Lower leg skin (tissue), 4 donors: ENCODE measurements at regions of chr1 and their contacts with region 1.

Region 1: DNA sequence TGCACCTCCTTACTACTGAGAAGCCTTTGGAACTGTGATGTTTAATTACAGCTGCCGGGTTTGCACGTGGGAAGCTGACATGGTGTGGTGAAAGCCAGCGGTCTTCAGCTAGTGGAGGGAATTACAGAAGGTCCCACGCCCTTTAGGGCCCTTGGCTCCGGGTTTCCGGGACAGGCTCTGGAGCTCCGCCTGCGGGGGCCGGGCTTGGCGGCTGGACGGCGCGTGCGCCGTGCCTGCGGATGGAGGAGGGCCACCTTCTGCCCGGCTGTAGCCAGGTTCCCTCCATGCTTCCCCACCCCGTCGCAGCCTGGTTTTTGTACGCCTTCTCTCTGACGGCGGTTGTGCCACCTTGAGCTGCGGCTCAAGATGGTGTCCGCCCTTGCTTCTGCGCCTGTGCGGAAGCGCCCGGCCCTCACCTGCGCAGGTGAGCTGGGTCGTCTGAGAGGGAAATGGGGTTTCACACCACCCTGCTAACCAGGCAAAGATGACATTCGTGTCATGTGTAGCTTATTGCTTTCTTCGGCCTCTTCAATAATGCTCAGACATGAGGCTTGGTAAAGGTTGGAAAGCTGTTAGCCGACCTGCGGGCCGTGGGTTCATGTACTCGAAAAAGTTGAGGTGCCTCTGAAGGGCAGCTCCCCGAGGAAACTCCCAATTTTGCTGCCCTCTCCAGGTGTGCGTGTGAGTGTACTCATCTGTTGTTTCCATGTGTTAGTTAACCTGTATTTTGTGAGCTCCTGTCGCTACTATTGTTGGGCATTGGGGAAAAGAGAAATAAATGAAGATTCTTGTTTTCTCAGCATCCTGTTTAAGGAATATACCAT is 36.6 kb upstream of the OPRD1 start:
- DNase-seq: peak; percentile 72 to 95
- H3K4me3 ChIP-seq: peak overlapping the region; percentile 34
- CTCF ChIP-seq: no peak
- POLR2A ChIP-seq: no peak

Region 2: DNA sequence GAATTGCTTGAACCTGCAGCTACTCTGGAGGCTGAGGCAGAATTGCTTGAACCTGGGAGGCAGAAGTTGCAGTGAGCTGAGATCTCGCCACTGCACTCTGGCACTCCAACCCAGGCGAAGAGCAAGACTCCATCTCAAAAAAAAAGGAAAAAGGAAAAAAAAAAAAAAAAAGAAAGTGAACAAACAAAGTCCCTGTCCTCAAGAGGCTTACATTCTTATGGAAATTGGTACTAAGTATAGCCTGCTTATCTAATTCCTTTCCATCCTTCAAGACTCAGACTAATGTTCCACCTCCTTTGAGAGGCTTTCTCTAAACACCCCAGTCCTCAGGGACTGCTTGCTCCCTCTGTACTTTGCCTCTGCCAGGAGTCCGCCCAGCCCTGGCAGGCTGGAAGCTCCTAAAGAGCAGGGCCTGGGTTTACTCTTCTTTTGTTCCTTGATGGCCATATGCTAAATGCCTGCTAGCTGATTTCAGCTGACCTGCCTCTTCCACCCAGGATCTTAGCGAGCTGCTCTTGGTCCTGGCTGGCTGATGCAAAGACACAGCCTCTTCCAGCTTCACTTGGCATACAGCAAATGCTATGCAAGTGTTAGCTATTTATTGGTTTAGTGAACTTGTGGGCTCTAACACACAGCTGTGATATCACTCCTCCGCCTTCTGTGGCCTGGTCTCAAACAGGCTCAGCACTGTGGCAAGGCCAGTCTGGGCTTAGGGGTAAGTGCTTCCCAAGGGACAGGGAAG is 1630.2 kb before region 1 on chr1:
- intact Hi-C with region 1: loop called (anchors 5 kb)
- DNase-seq: no peak
- H3K4me3 ChIP-seq: no peak overlapping the region
- CTCF ChIP-seq: no peak
- POLR2A ChIP-seq: no peak

Region 3: GRCh38 chr1:28480308-28480707 is 295.0 kb before region 1 on chr1:
- intact Hi-C with region 1: no loop called
- DNase-seq: peak in 1 of 2 donors; percentile 8
- H3K4me3 ChIP-seq: no peak overlapping the region
- CTCF ChIP-seq: no peak
- POLR2A ChIP-seq: no peak

Region 4: GRCh38 chr1:28631713-28632112 is 143.6 kb before region 1 on chr1:
- intact Hi-C with region 1: no loop called
- DNase-seq: no peak
- H3K4me3 ChIP-seq: no peak overlapping the region
- CTCF ChIP-seq: no peak
- POLR2A ChIP-seq: no peak

Region 5: DNA sequence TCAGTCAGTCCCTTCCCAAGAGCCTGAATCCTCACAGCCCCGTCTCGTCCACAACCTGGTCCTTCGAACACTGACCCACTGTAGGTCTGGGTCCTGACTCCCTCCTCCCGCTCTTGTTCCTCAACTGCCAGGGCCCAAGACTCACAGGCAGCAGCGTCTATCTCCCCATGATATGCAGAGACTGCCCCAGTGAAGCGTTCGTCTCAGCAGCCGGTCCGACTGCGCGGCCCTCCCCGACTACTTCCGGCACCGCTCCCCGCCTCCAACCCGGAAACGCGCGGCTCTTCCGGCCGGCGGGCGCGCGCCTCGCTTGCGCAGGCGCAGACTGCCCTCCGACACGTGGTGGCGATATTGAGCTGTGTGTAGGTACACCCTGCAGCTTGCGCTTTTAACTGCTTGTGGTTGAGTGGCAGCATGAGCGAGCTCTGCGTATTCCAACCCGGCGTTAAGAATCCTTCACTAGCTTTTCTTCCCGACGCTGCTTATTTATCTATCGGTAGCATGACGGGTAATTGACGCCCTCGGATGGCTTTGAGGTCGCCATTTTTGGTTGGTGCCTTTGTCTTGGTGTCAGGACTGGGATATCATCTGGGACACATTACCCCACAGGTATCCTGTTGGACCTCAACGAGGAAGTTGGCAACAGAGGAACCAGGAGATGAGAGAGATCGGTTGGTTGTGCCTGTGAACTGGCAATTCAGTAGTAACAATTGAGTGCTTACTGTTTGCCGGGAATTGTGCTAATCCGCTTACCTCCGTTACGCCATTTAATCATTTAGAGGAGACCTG is 132.3 kb before region 1 on chr1 and contains the start of gene TAF12:
- intact Hi-C with region 1: loop called (anchors 10 kb)
- DNase-seq: peak; percentile 89 to 97
- H3K4me3 ChIP-seq: peak within 1 kb of the TSS; percentile 79
- CTCF ChIP-seq: no peak
- POLR2A ChIP-seq: peak in 1 of 2 donors; percentile 72
- total RNA-seq, gene TAF12: 19.3 to 28.8 (median 24.0) TPM

Region 6: GRCh38 chr1:28751315-28752060 is 23.8 kb before region 1 on chr1:
- intact Hi-C with region 1: no loop called
- DNase-seq: no peak
- H3K4me3 ChIP-seq: no peak overlapping the region
- CTCF ChIP-seq: no peak
- POLR2A ChIP-seq: no peak

Region 7: DNA sequence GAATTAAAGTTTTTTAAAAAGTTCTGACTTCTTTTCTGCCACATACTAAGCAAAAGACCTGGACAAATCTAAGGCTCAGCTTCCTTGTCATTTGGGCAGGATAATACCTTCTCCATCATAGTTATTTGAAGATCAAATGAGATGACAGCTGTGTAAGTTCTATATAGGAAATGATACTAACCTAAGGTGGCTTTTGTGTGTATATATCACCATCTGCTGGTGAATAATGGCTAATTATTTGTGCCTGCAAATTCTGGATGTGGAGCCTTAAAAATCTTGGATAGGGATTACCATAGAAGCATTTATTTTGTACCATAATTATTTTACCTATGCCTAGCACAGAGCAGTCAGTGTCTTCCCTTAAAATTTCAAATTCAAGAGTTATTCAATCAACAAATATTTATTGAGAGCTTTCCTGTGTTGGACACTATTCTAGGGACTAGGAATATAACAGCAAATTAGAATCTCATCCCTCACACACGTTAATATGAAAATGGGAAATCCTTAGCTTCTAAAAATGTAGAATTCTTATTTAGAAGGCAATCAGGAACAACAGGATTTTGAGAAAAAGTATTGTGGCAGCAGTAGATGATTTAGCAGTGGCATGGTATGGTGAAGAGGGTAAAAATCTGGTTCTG is 258.6 kb after region 1 on chr1:
- intact Hi-C with region 1: loop called (anchors 10 kb)
- DNase-seq: no peak
- H3K4me3 ChIP-seq: no peak overlapping the region
- CTCF ChIP-seq: peak in 1 of 3 donors; percentile 37
- POLR2A ChIP-seq: no peak